Common myeloid progenitor, CD34-positive (primary cell): ENCODE measurements at regions of chr19 and their contacts with region 1.

Region 1: DNA sequence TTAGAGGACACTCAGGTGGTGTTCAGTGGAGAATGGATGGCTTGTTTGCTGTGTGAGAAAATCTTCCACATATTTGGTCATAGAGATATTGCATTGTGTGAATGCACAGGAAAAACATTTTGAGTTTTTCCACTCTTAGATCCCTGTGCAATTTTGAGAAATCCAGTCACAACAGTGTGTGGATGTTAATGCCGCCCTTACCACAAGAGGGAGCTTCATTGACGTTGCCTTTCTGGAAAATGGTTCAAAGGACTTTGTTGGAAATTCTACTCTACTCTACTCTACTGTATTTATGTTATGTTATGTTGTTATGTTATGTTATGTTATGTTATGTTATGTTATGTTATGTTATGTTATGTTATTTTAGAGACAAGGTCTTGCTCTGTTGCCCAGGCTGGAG is 13.4 kb downstream of the ZNF20 start:
- DNase-seq: peak; percentile 22 to 58 (median 51)
- H3K4me3 ChIP-seq: no peak overlapping the region
- H3K27ac ChIP-seq: no peak overlapping the region
- H3K4me1 ChIP-seq: no peaks in the 10 kb centered on the region
- H3K27me3 ChIP-seq: no peaks in the 10 kb centered on the region

Region 2: GRCh38 chr19:12092065-12092867 is 34.4 kb before region 1 on chr19:
- CTCF ChIA-PET with region 1: interaction called, 23 read pairs
- POLR2A ChIA-PET with region 1: no interaction called
- DNase-seq: peak; percentile 90 to 97 (median 96)
- H3K4me3 ChIP-seq: peak overlapping the region; percentile 67 to 92 (median 81)
- H3K27ac ChIP-seq: peak overlapping the region; percentile 77 to 91
- H3K4me1 ChIP-seq: peaks cover 0 to 12% (median 4%) of the 10 kb centered on the region in 4 experiments
- H3K27me3 ChIP-seq: no peaks in the 10 kb centered on the region

Region 3: GRCh38 chr19:12187625-12188024 is 60.9 kb after region 1 on chr19:
- CTCF ChIA-PET with region 1: no interaction called
- POLR2A ChIA-PET with region 1: no interaction called
- DNase-seq: no peak
- H3K4me3 ChIP-seq: no peak overlapping the region
- H3K27ac ChIP-seq: no peak overlapping the region
- H3K4me1 ChIP-seq: no peaks in the 10 kb centered on the region
- H3K27me3 ChIP-seq: no peaks in the 10 kb centered on the region